AG04450 (cell line): ENCODE measurements at regions of chr14 and their contacts with region 1.

Region 1: GRCh38 chr14:100015251-100015655 is 50.0 kb upstream of the EVL start:
- DNase-seq: no peak
- H3K4me3 ChIP-seq: no peak overlapping the region
- H3K27ac ChIP-seq: peak overlapping the region; percentile 62
- H3K27me3 ChIP-seq: no peaks in the 10 kb centered on the region
- CTCF ChIP-seq: no peak

Region 2: DNA sequence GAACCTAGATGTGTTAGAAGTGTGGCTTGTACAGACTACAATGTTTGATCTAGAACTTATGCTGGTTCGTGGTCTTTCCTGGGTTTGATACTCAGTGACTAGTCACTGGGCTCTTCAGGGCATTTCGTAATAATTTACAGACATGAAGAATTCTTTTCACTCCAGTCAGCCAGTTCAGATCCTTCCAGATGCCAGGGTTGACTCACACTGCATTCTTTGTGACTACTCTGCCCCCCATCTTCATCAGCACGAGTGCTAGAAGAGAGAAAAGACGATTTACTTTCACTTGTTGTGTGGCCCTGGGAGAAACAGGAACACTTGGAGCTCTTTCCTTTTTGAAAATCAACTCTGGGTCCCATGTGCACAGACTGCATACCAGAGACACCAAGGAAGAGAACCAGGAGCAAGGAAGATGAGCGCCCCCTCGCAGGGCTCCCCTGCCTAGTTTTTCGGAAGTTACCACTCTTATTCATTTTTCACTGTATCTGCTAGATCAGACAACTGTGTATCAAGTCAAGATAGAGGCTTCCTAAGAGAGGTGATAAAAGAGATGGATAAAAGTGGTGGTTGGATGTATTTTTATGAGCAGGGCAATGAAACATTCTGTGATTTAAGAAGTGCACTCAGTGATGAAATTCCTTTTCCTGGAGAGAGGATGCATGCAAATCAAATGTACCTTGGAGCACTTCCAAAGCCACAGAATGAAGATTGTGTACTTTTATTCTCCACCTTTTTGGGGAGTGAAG is 16.5 kb after region 1 on chr14:
- CTCF ChIA-PET with region 1: interaction called, 9 read pairs
- POLR2A ChIA-PET with region 1: interaction called, 16 read pairs
- DNase-seq: peak; percentile 95
- H3K4me3 ChIP-seq: peak overlapping the region; percentile 59
- H3K27ac ChIP-seq: peak overlapping the region; percentile 99
- H3K27me3 ChIP-seq: no peaks in the 10 kb centered on the region
- CTCF ChIP-seq: no peak